Left cardiac atrium (tissue), 4 donors: ENCODE measurements at regions of chr3 and their contacts with region 1.

Region 1: DNA sequence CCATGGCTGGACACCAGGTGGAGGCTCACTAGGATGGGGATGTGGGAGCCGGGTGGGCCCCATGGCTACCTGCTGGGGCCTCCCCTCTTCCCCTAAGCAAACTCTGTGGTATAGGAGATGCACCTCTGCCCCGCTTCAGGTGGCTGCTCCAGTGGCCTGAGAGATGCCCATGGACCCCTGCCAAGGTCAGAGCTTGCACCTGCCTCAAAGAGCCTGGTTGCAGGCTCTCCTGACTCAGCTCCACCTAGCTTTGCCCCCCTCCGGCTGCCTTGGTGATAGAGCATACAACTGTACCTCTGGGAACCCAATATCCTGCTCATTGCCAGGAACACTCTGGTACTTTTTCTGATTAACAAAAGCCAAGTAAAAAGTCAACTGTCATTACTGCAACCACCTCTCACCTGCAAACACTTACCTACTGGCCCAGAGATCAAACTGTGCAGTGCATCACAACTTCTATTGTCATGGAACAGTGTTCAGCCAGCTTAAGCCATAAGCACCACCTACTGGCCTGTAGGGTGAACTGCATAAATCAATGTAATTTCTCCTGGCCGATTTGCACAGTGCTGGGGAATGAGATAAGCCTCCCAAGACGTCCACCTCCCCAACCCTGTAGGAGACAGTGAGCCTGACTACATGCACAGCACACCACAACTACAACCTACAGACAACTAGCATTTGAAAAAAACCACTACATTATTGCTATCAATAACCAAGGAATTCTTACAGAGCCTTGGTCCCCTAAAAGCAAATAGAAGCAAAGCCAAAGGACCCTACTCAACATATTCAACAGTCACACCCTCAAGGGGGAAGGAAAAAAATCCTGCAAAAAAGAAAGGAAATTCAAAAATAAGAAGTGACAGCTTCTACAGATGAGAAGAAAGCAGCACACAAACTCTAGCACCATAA is 352.4 kb upstream of the ARHGEF26 start:
- DNase-seq: no peak
- ATAC-seq: peak; percentile 83 to 88

Region 2: GRCh38 chr3:153026026-153026425 is 742.8 kb before region 1 on chr3:
- intact Hi-C with region 1: loop called in 1 of 2 experiments (anchors 5 kb)
- DNase-seq: no peak
- ATAC-seq: no peak

Region 3: GRCh38 chr3:153043729-153044328 is 725.0 kb before region 1 on chr3:
- intact Hi-C with region 1: loop called in 1 of 2 experiments (anchors 5 kb)
- DNase-seq: no peak
- ATAC-seq: peak; percentile 47 to 74

Region 4: GRCh38 chr3:153855772-153856171 is 87.0 kb after region 1 on chr3:
- intact Hi-C with region 1: no loop called
- DNase-seq: no peak
- ATAC-seq: no peak